Mammary epithelial cell (primary cell): ENCODE measurements at regions of chr11 and their contacts with region 1.

Region 1: DNA sequence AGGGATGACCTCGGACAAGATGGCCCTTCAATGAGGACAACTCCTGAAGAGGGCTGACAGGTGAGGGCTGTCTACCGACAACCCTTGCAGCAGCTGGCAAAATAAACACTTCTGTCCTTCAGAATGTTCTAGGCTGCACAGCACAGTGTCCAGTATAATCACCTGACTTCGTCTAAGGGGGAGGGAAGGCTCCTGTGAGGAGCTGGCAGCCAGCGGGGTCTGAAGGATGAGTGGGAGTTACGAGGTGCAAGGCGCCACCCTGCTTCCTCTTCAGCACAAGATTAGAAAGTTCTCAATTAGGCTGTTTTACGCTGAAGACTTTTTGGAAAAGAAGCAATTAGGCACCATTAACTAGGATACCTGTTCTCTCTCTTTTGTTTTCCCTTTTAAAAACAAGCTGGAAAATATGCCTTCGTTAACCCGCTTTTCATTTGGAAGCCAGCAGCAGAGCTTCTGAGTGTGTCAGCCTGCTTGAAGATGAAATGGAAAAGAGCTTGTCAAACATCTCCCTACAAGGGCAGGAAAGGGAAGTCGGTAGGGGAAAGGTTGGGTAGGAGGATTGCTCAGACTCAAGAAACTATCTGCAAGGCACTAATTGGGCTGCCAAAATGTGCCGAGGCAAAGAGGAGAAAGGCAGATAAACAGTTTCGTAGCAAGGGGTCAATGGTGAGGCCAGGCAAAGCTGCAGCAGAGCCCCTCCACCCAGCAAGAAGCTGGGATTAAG is 592.2 kb upstream of the CADM1 start:
- DNase-seq: no peak
- H3K4me3 ChIP-seq: no peak overlapping the region
- H3K27ac ChIP-seq: no peak overlapping the region
- H3K4me1 ChIP-seq: no peaks in the 10 kb centered on the region
- H3K27me3 ChIP-seq: no peaks in the 10 kb centered on the region
- CTCF ChIP-seq: no peak

Region 2: DNA sequence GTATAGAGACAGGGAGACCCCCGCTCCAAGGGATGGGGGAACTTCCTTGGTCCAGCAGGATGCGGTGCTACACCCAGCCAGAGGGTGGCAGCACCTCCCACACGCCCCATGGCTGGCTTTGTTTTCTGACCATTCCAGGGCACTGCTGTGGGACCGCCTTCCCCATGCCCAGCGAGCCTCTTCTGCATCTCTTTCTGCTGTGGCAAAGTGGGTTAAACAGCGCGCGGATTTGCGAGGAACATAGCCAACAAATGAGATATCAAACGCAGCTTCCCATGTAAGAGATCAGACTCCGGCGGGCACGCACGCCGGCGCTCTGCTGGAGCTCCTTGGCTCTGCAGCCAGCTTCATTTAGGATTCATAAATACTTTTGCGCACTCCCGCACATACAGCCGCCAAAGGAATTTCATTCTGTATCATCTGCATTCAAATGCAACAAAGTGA is 106.4 kb before region 1 on chr11:
- CTCF ChIA-PET with region 1: no interaction called
- dilution Hi-C with region 1: loop called (anchors 5 kb)
- in situ Hi-C with region 1: no loop called
- intact Hi-C with region 1: no loop called
- DNase-seq: no peak
- H3K4me3 ChIP-seq: peak overlapping the region in 1 of 3 experiments; percentile 31
- H3K27ac ChIP-seq: no peak overlapping the region
- H3K4me1 ChIP-seq: no peaks in the 10 kb centered on the region
- H3K27me3 ChIP-seq: no peaks in the 10 kb centered on the region
- CTCF ChIP-seq: peak; percentile 54 to 76

Region 3: GRCh38 chr11:116499396-116500003 is 403.1 kb after region 1 on chr11:
- CTCF ChIA-PET with region 1: no interaction called
- dilution Hi-C with region 1: no loop called
- in situ Hi-C with region 1: no loop called
- intact Hi-C with region 1: no loop called
- DNase-seq: peak; percentile 33
- H3K4me3 ChIP-seq: no peak overlapping the region
- H3K27ac ChIP-seq: no peak overlapping the region
- H3K4me1 ChIP-seq: no peaks in the 10 kb centered on the region
- H3K27me3 ChIP-seq: peaks cover 10% of the 10 kb centered on the region
- CTCF ChIP-seq: peak; percentile 44 to 62